Heart left ventricle (tissue), 16 donors: ENCODE measurements at regions of chr5 and their contacts with region 1.

Region 1: DNA sequence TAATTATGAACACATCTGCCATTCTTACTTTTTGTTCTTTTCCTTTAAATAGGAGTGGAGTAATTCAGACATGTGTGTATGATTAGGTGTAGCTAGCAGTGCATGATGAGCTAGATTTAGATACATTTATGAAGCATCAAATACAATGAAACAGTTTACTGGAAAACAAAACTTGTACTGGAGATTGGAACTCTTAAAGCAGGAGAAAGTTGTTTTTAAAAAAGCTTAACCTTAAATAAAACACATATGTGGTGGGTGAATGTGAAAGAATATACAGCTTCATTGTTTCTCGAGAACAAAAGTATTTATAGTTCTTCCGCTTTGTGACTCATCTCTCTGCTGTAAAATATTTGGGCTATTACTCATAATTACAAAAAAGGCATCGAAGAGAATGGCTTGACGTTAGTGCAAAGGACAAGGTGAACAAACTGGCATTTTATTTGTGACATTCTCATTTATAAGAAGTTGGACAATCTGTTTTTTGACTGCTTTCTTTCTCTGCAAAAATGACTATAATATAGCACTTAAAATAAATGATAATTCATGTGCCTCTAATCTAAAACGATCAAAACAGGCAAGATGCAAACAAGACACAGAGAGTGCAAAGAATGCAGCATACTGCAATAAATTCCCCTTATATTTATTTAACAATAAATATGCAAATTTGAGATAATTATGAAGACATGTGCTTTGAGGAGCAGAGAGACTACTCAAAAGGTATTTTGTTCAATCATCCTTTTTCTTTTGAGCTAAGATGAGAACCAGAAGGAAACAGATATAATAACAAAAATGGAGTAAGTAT is 478.8 kb downstream of the CETN3 start:
- DNase-seq: no peak
- ATAC-seq: peak; percentile 49 to 87 (median 72)
- H3K4me3 ChIP-seq: no peak overlapping the region
- H3K27ac ChIP-seq: peak overlapping the region in 11 of 12 donors; percentile 8 to 72 (median 31)
- H3K4me1 ChIP-seq: peaks cover 0 to 40% (median 24%) of the 10 kb centered on the region in 12 donors
- H3K27me3 ChIP-seq: no peaks in the 10 kb centered on the region
- CTCF ChIP-seq: no peak
- POLR2A ChIP-seq: no peak

Region 2: GRCh38 chr5:90096415-90097081 is 165.8 kb after region 1 on chr5:
- intact Hi-C with region 1: no loop called
- DNase-seq: peak in 1 of 5 donors; percentile 28
- ATAC-seq: peak in 2 of 4 donors; percentile 58 to 80
- H3K4me3 ChIP-seq: no peak overlapping the region
- H3K27ac ChIP-seq: no peak overlapping the region
- H3K4me1 ChIP-seq: peaks cover 0 to 6% (median 0%) of the 10 kb centered on the region in 12 donors
- H3K27me3 ChIP-seq: no peaks in the 10 kb centered on the region
- CTCF ChIP-seq: no peak
- POLR2A ChIP-seq: no peak

Region 3: GRCh38 chr5:90184764-90185163 is 254.0 kb after region 1 on chr5:
- intact Hi-C with region 1: loop called in 1 of 10 experiments (anchors 10 kb)
- DNase-seq: no peak
- ATAC-seq: no peak
- H3K4me3 ChIP-seq: no peak overlapping the region
- H3K27ac ChIP-seq: no peak overlapping the region
- H3K4me1 ChIP-seq: peaks cover 0 to 4% (median 0%) of the 10 kb centered on the region in 12 donors
- H3K27me3 ChIP-seq: no peaks in the 10 kb centered on the region
- CTCF ChIP-seq: no peak
- POLR2A ChIP-seq: no peak